ENCODE measurements at regions of chr16 and their contacts with region 1.

Region 1: GRCh38 chr16:53509906-53510703 is 7.1 kb upstream of the AKTIP start:
- DNase-seq: peak in 8 of 9 experiments; percentile 31 to 80 (median 54)
- ATAC-seq: peak; percentile 78
- H3K4me3 ChIP-seq: peak overlapping the region; percentile 14 to 41
- H3K4me3 Mint-ChIP-seq: peak overlapping the region; percentile 58
- H3K27ac ChIP-seq: no peak overlapping the region
- H3K27ac Mint-ChIP-seq: no peak overlapping the region
- H3K4me1 ChIP-seq: peaks cover 17% of the 10 kb centered on the region
- H3K4me1 Mint-ChIP-seq: peaks cover 39% of the 10 kb centered on the region
- H3K27me3 ChIP-seq: no peaks in the 10 kb centered on the region
- H3K27me3 Mint-ChIP-seq: no peaks in the 10 kb centered on the region
- CTCF ChIP-seq: peak; percentile 98

Region 2: DNA sequence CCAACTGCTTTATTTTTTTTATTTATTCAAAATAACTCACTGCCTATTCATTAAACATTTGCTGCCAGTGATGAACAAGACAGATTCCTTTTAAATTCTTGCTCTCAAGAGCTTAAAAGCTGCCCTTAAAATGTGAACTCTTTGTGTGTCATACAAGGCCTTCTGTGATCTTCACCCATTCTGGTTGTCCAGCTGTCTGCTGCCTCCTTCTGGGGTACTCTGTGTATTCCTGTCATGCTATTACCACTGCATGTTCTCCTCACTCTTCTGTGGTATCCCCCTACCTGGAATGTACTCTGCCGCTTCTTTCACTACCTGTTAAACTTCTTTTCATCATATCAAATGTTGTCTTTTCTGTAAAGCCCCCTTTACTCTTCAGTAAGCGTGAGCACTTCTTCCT is 289.5 kb before region 1 on chr16:
- CTCF ChIA-PET with region 1: no interaction called
- POLR2A ChIA-PET with region 1: no interaction called
- intact Hi-C with region 1: loop called in 1 of 2 experiments (anchors 10 kb)
- DNase-seq: peak in 4 of 9 experiments; percentile 12 to 50 (median 30)
- ATAC-seq: peak; percentile 56
- H3K4me3 ChIP-seq: no peak overlapping the region
- H3K4me3 Mint-ChIP-seq: no peak overlapping the region
- H3K27ac ChIP-seq: no peak overlapping the region
- H3K27ac Mint-ChIP-seq: no peak overlapping the region
- H3K4me1 ChIP-seq: no peaks in the 10 kb centered on the region
- H3K4me1 Mint-ChIP-seq: peaks cover 3% of the 10 kb centered on the region
- H3K27me3 ChIP-seq: no peaks in the 10 kb centered on the region
- H3K27me3 Mint-ChIP-seq: no peaks in the 10 kb centered on the region
- CTCF ChIP-seq: peak; percentile 35

Region 3: GRCh38 chr16:53282975-53283946 is 226.8 kb before region 1 on chr16:
- CTCF ChIA-PET with region 1: no interaction called
- POLR2A ChIA-PET with region 1: no interaction called
- intact Hi-C with region 1: loop called in 1 of 2 experiments (anchors 10 kb)
- DNase-seq: peak in 2 of 9 experiments; percentile 38 to 53
- ATAC-seq: no peak
- H3K4me3 ChIP-seq: no peak overlapping the region
- H3K4me3 Mint-ChIP-seq: no peak overlapping the region
- H3K27ac ChIP-seq: no peak overlapping the region
- H3K27ac Mint-ChIP-seq: no peak overlapping the region
- H3K4me1 ChIP-seq: no peaks in the 10 kb centered on the region
- H3K4me1 Mint-ChIP-seq: no peaks in the 10 kb centered on the region
- H3K27me3 ChIP-seq: no peaks in the 10 kb centered on the region
- H3K27me3 Mint-ChIP-seq: no peaks in the 10 kb centered on the region
- CTCF ChIP-seq: peak; percentile 47

Region 4: GRCh38 chr16:53309457-53309856 is 200.6 kb before region 1 on chr16:
- CTCF ChIA-PET with region 1: no interaction called
- POLR2A ChIA-PET with region 1: no interaction called
- intact Hi-C with region 1: loop called in 1 of 2 experiments (anchors 5 kb)
- DNase-seq: no peak
- ATAC-seq: no peak
- H3K4me3 ChIP-seq: no peak overlapping the region
- H3K4me3 Mint-ChIP-seq: no peak overlapping the region
- H3K27ac ChIP-seq: no peak overlapping the region
- H3K27ac Mint-ChIP-seq: no peak overlapping the region
- H3K4me1 ChIP-seq: no peaks in the 10 kb centered on the region
- H3K4me1 Mint-ChIP-seq: no peaks in the 10 kb centered on the region
- H3K27me3 ChIP-seq: no peaks in the 10 kb centered on the region
- H3K27me3 Mint-ChIP-seq: no peaks in the 10 kb centered on the region
- CTCF ChIP-seq: no peak